T-cell (primary cell): ENCODE measurements at regions of chr10 and their contacts with region 1.

Region 1: GRCh38 chr10:61903221-61903927 is 1.9 kb downstream of the ARID5B start:
- DNase-seq: peak; percentile 41 to 77 (median 61)
- ATAC-seq: peak; percentile 54 to 59 (median 58)
- H3K4me3 ChIP-seq: peak overlapping the region; percentile 92 to 99
- H3K4me3 Mint-ChIP-seq: peak overlapping the region; percentile 80 to 94 (median 87)
- H3K27ac ChIP-seq: peak overlapping the region; percentile 97
- H3K27ac Mint-ChIP-seq: peak overlapping the region; percentile 94 to 95
- H3K4me1 ChIP-seq: peaks cover 10 to 24% of the 10 kb centered on the region in 2 experiments
- H3K4me1 Mint-ChIP-seq: peaks cover 44 to 52% (median 46%) of the 10 kb centered on the region in 3 donors
- H3K27me3 ChIP-seq: no peaks in the 10 kb centered on the region
- H3K27me3 Mint-ChIP-seq: no peaks in the 10 kb centered on the region

Region 2: DNA sequence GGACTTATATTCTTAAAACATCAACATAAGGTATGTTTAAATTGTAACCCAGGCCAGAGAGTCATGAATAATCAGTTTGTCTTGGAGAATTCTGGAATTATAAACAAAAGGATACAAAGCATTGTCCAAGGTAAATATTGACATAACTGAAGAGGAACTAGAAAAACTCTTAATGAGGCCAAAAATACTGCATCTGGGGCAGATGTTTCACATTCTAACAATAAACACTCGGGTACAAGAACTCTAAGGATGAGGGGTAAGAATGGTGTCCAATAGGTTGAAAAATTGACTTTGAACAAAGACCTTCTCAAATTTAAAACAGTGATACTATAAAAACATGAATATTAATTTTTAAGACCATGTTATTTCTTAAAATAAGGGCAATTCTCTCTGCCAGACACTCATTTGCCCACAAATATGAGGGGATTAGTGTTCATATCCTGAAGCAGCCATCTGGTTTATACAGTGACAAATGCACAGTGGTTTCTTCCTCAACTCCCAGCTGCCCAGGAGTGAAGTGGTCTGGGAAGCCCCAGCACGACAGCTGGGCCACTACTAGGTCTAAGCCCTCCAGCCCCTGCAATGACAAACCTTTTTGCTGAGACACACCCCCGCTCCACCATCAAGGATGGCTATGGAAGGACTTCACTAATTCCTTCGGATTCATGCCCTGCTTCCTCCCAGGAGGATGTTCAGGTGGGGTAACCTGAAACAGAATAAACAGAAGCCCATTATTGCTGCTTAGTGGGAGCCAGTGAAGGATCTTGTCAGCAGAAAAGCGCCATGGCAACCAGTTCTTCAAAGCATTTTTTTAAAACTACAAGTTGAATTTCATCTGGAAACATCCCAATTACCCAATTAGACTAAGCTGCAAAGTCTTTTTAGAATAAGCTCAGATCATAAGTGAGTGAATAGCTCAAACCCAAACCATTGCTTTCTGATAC is 109.3 kb before region 1 on chr10:
- CTCF ChIA-PET with region 1: no interaction called
- POLR2A ChIA-PET with region 1: no interaction called
- DNase-seq: no peak
- ATAC-seq: no peak
- H3K4me3 ChIP-seq: no peak overlapping the region
- H3K4me3 Mint-ChIP-seq: no peak overlapping the region
- H3K27ac ChIP-seq: no peak overlapping the region
- H3K27ac Mint-ChIP-seq: no peak overlapping the region
- H3K4me1 ChIP-seq: no peaks in the 10 kb centered on the region
- H3K4me1 Mint-ChIP-seq: peaks cover 0 to 2% (median 0%) of the 10 kb centered on the region in 3 donors
- H3K27me3 ChIP-seq: no peaks in the 10 kb centered on the region
- H3K27me3 Mint-ChIP-seq: no peaks in the 10 kb centered on the region

Region 3: DNA sequence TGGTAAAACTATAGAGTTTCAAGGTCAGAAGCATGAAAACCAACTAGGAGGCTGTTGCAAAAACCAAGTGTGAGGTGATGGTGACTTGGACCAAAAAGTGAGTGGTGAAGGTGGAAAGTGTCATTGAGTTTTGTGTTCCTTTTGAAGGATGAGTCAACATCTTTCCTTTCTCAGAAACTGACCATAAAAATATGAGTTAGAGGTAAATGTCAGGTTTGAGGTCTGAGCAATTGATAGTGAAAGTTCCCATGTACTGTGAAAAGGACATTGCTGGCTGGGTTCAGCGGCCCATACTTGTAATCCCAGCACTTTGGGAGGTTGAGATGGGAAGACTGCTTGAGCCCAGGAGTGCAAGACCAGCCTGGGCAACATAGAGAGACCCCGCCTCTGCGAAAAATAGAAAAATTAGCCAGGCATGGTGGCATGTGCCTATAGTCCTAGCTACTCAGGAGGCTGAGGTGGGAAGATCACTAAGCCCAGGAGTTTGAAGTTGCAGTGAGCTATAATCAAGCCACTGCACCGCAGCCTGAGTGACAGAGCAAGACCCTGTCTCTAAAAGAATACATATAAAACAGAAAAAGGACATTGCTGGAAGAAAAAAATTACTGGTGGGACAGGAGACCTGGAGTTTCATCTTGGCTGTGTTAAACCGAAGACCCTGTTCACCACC is 91.2 kb before region 1 on chr10:
- CTCF ChIA-PET with region 1: no interaction called
- POLR2A ChIA-PET with region 1: no interaction called
- DNase-seq: no peak
- ATAC-seq: no peak
- H3K4me3 ChIP-seq: no peak overlapping the region
- H3K4me3 Mint-ChIP-seq: no peak overlapping the region
- H3K27ac ChIP-seq: no peak overlapping the region
- H3K27ac Mint-ChIP-seq: no peak overlapping the region
- H3K4me1 ChIP-seq: no peaks in the 10 kb centered on the region
- H3K4me1 Mint-ChIP-seq: no peaks in the 10 kb centered on the region
- H3K27me3 ChIP-seq: no peaks in the 10 kb centered on the region
- H3K27me3 Mint-ChIP-seq: no peaks in the 10 kb centered on the region

Region 4: GRCh38 chr10:61943674-61944410 is 40.5 kb after region 1 on chr10:
- CTCF ChIA-PET with region 1: interaction called, 4 to 39 read pairs
- POLR2A ChIA-PET with region 1: interaction called, 4 to 6 read pairs
- DNase-seq: peak in 12 of 35 experiments; percentile 3 to 62 (median 13)
- ATAC-seq: peak; percentile 23 to 80 (median 48)
- H3K4me3 ChIP-seq: no peak overlapping the region
- H3K4me3 Mint-ChIP-seq: peak overlapping the region; percentile 65 to 77 (median 76)
- H3K27ac ChIP-seq: peak overlapping the region; percentile 87
- H3K27ac Mint-ChIP-seq: peak overlapping the region; percentile 96 to 97
- H3K4me1 ChIP-seq: peaks cover 8 to 18% of the 10 kb centered on the region in 2 experiments
- H3K4me1 Mint-ChIP-seq: peaks cover 46 to 59% (median 58%) of the 10 kb centered on the region in 3 donors
- H3K27me3 ChIP-seq: no peaks in the 10 kb centered on the region
- H3K27me3 Mint-ChIP-seq: no peaks in the 10 kb centered on the region

Region 5: DNA sequence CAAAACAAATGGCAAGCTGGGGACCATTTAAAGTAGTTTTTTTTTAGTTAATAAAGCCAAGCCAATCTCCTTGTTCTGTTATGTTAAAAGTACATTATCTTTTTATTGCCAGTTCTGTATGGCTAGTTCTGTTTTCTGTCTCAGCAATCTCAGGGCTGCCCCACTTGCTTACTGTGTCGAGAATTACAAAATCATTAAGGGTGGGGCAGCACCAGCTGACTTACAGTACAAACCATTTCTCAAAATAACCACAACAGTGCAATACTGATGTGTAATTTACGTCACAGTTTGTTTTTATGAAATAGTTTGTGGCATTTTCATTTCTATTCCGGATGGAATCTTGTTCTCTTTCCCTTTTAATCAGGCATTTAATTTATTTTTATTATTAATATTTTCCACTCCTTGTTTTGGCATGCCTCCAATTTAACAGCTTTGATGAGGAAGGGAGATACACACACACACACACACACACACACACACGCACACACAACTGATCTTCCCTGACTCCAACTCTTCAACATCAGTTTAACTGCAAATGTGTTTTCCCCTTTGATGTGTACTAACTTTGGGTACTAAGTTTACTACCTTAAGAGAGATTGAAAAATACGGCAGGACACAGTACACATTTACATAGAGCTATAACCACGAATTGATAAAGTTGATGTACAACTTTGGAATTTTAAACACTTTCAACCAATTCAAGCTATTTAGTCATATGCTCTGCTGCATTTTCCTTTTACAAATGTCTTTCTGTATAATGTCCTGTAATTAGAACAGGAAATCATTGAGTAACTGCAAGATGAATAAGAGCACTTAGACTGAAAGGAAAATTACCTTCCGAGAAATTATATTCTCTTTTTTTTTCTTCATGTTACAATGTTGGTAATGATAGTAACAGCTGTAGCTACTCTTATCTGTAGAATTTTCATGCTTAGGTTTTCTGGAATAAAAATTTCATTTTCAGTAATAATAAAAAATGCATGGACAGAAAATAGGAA is 89.6 kb after region 1 on chr10:
- CTCF ChIA-PET with region 1: interaction called, 4 to 6 read pairs
- POLR2A ChIA-PET with region 1: interaction called, 3 to 18 read pairs
- DNase-seq: peak in 33 of 35 experiments; percentile 24 to 82 (median 64)
- ATAC-seq: peak; percentile 74 to 87 (median 80)
- H3K4me3 ChIP-seq: peak overlapping the region in 1 of 2 donors; percentile 14
- H3K4me3 Mint-ChIP-seq: peak overlapping the region; percentile 63 to 82 (median 66)
- H3K27ac ChIP-seq: peak overlapping the region; percentile 85
- H3K27ac Mint-ChIP-seq: peak overlapping the region; percentile 87 to 95
- H3K4me1 ChIP-seq: peaks cover 12 to 13% of the 10 kb centered on the region in 2 experiments
- H3K4me1 Mint-ChIP-seq: peaks cover 58 to 82% (median 78%) of the 10 kb centered on the region in 3 donors
- H3K27me3 ChIP-seq: no peaks in the 10 kb centered on the region
- H3K27me3 Mint-ChIP-seq: no peaks in the 10 kb centered on the region

Region 6: GRCh38 chr10:62153191-62153590 is 249.8 kb after region 1 on chr10:
- CTCF ChIA-PET with region 1: no interaction called
- POLR2A ChIA-PET with region 1: no interaction called
- DNase-seq: no peak
- ATAC-seq: no peak
- H3K4me3 ChIP-seq: no peak overlapping the region
- H3K4me3 Mint-ChIP-seq: no peak overlapping the region
- H3K27ac ChIP-seq: no peak overlapping the region
- H3K27ac Mint-ChIP-seq: no peak overlapping the region
- H3K4me1 ChIP-seq: no peaks in the 10 kb centered on the region
- H3K4me1 Mint-ChIP-seq: peaks cover 0 to 22% (median 6%) of the 10 kb centered on the region in 3 donors
- H3K27me3 ChIP-seq: no peaks in the 10 kb centered on the region
- H3K27me3 Mint-ChIP-seq: no peaks in the 10 kb centered on the region